ENCODE measurements at regions of chrX and their contacts with region 1.

Region 1: GRCh38 chrX:120090208-120090607 is 12.7 kb upstream of the RHOXF2B start:
- DNase-seq: no peak
- ATAC-seq: no peak
- H3K4me3 ChIP-seq: no peak overlapping the region
- H3K27ac ChIP-seq: no peak overlapping the region
- H3K4me1 ChIP-seq: no peaks in the 10 kb centered on the region
- H3K27me3 ChIP-seq: no peaks in the 10 kb centered on the region
- CTCF ChIP-seq: no peak
- POLR2A ChIP-seq: no peak

Region 2: GRCh38 chrX:120120223-120120622 is 30.0 kb after region 1 on chrX:
- in situ Hi-C with region 1: no loop called
- intact Hi-C with region 1: no loop called
- DNase-seq: peak in 1 of 2 donors; percentile 13
- ATAC-seq: no peak
- H3K4me3 ChIP-seq: no peak overlapping the region
- H3K27ac ChIP-seq: no peak overlapping the region
- H3K4me1 ChIP-seq: no peaks in the 10 kb centered on the region
- H3K27me3 ChIP-seq: no peaks in the 10 kb centered on the region
- CTCF ChIP-seq: no peak
- POLR2A ChIP-seq: no peak

Region 3: GRCh38 chrX:120213436-120214265 is 123.4 kb after region 1 on chrX:
- in situ Hi-C with region 1: loop called in 3 of 4 experiments (anchors 25 kb)
- intact Hi-C with region 1: no loop called
- DNase-seq: peak in 1 of 2 donors; percentile 18
- ATAC-seq: peak in 1 of 2 donors; percentile 68
- H3K4me3 ChIP-seq: no peak overlapping the region
- H3K27ac ChIP-seq: no peak overlapping the region
- H3K4me1 ChIP-seq: no peaks in the 10 kb centered on the region
- H3K27me3 ChIP-seq: no peaks in the 10 kb centered on the region
- CTCF ChIP-seq: peak in 4 of 5 experiments; percentile 30 to 78 (median 46)
- POLR2A ChIP-seq: no peak

Region 4: DNA sequence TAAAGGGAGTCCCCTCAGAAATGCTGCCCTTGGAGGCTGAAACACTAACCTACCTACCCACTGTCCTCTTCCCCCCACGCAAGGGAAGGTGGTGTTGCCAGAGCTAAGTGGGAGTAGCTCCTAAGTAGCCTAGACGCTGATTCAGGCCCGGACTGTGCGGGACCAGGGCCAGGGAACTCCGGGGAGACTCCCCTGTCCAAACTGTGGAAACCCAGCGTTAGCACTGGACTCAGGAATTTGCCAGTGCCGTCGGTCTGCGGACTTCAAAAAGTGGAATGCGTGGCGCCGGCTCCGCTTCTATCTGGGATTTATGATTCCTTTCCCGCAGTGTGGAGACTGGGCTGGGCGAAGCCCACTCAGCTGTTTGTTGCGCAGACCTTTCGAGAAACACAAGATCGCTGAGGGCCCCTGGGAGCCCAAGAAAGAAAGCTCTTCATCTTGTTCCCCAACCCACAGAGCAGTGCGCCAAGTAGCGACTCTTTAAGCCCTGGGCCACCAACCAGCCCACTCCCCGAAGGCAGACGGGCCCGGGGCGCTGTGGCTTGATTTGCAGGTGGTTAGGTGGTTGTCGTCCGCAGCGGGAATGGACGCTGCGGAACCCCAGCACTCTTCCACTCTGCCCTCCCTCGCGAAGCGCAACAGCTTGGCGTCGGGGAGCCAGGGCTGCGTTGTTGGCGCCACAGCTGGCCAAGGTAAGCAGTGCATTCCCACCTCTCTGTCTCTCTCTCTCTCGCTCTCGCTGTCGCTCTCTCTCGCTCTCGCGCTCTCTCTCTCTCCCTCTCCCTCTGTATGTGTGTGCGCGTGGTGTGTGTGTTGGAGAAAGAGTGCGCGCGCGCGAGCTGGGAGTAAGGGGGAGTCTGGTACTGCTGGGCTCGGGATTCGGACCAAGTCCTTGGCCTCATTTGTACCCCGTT is 219.0 kb after region 1 on chrX:
- in situ Hi-C with region 1: no loop called
- intact Hi-C with region 1: no loop called
- DNase-seq: peak; percentile 6 to 53
- ATAC-seq: peak; percentile 80 to 87
- H3K4me3 ChIP-seq: peak overlapping the region; percentile 44 to 50 (median 45)
- H3K27ac ChIP-seq: no peak overlapping the region
- H3K4me1 ChIP-seq: peaks cover 4 to 5% of the 10 kb centered on the region in 2 donors
- H3K27me3 ChIP-seq: peaks cover 0 to 11% (median 0%) of the 10 kb centered on the region in 3 donors
- CTCF ChIP-seq: peak in 3 of 5 experiments; percentile 11 to 42 (median 34)
- POLR2A ChIP-seq: no peak

Region 5: GRCh38 chrX:120408168-120408567 is 318.0 kb after region 1 on chrX:
- in situ Hi-C with region 1: no loop called
- intact Hi-C with region 1: no loop called
- DNase-seq: no peak
- ATAC-seq: no peak
- H3K4me3 ChIP-seq: no peak overlapping the region
- H3K27ac ChIP-seq: no peak overlapping the region
- H3K4me1 ChIP-seq: no peaks in the 10 kb centered on the region
- H3K27me3 ChIP-seq: no peaks in the 10 kb centered on the region
- CTCF ChIP-seq: no peak
- POLR2A ChIP-seq: no peak